A673 (cell line): ENCODE measurements at regions of chr19 and their contacts with region 1.

Region 1: DNA sequence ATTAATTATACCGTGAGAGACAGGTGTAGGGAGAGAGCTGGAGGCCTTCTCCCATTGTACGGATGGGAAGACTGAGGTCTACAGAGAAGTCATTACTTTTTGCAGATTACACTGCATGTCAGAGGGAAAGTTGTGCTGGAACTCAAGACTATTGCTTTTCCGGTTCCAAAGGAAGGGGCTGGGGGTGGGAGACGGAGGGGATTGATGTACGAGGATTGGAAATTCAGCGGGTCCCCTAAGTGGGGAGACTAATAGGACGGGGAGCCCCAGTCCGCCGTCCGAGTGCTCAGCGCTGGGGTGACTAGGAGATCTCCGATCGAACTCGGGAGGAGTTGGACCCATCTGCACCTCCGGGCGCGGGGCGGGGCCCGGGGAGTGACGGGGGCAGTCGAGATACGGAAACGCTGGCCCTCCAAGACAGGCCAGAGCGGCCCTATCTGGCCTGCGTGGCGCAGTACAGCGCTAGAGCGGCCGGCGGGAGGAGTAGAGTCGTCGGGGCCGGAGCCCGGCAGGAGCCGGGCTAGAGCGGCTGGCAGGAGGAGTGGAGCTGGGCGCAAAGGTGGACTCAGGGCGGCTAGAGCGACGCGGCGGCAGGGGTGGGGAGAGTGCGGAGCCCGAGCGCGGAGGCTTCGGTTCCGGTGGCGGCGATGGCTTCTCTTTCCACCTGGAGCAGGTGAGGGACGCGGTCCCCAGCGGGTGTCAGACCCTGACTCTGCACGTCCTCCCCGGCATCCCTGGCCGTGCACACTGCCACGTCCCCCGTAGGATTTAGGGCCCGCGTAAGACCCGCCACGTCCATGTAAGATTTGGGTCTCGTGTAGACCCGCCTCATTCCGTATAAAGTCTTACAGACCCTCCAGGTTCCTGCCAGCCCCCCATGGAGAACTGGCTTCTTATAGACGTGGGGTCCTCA is 1.1 kb downstream of the ARHGEF1 start:
- DNase-seq: peak; percentile 99
- H3K4me3 ChIP-seq: peak overlapping the region; percentile 84
- H3K27ac ChIP-seq: peak overlapping the region; percentile 91
- H3K4me1 ChIP-seq: peaks cover 65% of the 10 kb centered on the region
- H3K27me3 ChIP-seq: no peaks in the 10 kb centered on the region
- CTCF ChIP-seq: no peak

Region 2: DNA sequence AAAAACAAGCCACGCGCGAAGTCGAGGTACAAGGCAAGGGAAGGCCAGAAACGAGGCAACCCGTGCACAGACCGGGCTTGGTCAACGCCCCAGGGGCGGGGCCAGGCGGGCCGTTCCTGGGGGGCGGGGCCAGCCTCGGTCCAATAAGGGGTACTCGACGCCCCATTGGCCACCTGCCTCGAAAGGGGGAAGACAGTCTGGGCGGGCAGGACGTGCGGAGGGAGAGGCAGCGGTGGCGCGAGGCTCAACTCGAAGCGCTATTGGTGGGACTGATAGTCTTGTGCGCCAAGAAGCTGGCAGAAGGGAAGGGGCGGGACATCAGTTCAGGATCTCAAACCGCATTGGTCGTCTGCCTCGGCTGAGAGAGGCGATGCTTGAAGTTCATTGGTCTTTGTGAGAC is 39.5 kb before region 1 on chr19 and contains the start of gene LYPD4:
- CTCF ChIA-PET with region 1: no interaction called
- POLR2A ChIA-PET with region 1: no interaction called
- intact Hi-C with region 1: no loop called
- DNase-seq: no peak
- H3K4me3 ChIP-seq: no peak within 1 kb of the TSS
- H3K27ac ChIP-seq: no peak within 1 kb of the TSS
- H3K4me1 ChIP-seq: no peaks in the 10 kb centered on the region
- H3K27me3 ChIP-seq: no peaks in the 10 kb centered on the region
- CTCF ChIP-seq: no peak
- total RNA-seq, gene LYPD4: not detected in 2 replicates

Region 3: GRCh38 chr19:41859618-41860418 is 24.3 kb before region 1 on chr19 and contains the start of gene RPS19:
- CTCF ChIA-PET with region 1: interaction called, 6 read pairs
- POLR2A ChIA-PET with region 1: no interaction called
- intact Hi-C with region 1: loop called (anchors 1 kb)
- DNase-seq: peak; percentile 99
- H3K4me3 ChIP-seq: peak within 1 kb of the TSS; percentile 87
- H3K27ac ChIP-seq: peak within 1 kb of the TSS; percentile 97
- H3K4me1 ChIP-seq: peaks cover 45% of the 10 kb centered on the region
- H3K27me3 ChIP-seq: no peaks in the 10 kb centered on the region
- CTCF ChIP-seq: peak; percentile 68
- total RNA-seq, gene RPS19: 2,479 and 2,559 TPM in 2 replicates

Region 4: DNA sequence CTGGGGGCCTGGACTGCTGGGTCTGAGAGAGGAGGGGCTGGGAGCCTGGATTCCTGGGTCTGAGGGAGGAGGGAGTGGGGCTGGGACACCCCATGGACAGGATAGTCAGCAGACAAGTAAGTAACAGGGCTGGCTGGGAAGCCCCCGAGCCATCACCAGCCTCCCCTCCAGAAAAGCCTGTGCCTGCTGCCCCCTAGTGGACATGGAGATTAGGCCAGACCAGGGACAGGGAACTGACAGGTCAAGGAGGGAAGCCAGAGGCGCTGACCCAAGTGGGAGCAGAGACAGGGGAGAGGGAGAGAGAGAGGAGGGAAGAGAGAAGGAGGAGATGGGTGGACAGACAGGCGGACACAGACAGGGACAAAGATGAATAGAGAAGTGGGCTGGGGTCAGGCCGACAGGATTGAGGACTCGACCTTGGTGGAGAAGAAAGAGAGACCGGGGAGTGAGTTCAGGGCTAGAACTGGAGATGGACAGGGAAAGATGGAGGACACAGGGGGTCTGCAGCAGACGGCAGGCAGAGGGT is 50.8 kb after region 1 on chr19:
- CTCF ChIA-PET with region 1: interaction called, 5 read pairs
- POLR2A ChIA-PET with region 1: interaction called, 3 read pairs
- intact Hi-C with region 1: loop called (anchors 5 kb)
- DNase-seq: peak; percentile 79
- H3K4me3 ChIP-seq: no peak overlapping the region
- H3K27ac ChIP-seq: no peak overlapping the region
- H3K4me1 ChIP-seq: peaks cover 66% of the 10 kb centered on the region
- H3K27me3 ChIP-seq: no peaks in the 10 kb centered on the region
- CTCF ChIP-seq: peak; percentile 96

Region 5: DNA sequence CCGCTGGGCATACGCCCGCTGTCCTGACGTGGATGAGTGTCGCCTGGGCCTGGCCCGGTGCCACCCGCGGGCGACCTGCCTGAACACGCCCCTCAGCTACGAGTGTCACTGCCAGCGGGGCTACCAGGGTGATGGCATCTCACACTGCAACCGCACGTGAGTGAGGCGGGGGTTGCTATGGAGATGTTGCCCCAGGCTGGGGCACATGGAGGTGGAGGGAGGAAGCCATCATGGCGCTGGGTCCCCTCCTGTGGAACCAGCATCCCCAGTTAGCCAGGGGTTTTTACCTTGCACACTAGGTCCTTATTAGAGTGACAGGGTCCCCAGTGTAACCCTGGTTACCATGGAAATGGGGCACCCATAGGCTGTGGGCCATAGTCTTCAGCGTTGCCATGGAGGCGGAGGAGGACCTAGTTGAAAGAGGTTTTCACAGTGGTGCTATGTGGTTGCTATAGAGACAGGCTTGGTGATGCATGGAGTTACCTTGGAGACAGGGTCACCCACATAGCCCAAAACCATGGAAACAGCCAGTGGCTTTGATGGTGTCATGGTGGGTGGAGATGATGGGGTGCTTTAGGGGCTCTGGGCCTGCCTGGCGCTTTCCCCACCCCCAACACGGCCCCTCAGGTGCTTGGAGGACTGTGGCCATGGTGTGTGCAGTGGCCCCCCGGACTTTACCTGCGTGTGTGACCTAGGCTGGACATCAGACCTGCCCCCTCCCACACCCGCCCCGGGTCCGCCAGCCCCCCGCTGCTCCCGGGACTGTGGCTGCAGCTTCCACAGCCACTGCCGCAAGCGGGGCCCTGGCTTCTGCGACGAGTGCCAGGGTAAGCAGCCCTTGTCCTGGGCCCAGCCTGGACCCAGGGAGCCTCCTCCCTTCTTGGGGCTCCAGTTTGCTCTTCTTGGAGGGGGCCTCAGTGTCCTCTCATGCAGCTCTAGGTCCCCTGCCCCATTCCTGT is 468.5 kb after region 1 on chr19:
- CTCF ChIA-PET with region 1: no interaction called
- POLR2A ChIA-PET with region 1: no interaction called
- intact Hi-C with region 1: no loop called
- DNase-seq: peak; percentile 29
- H3K4me3 ChIP-seq: no peak overlapping the region
- H3K27ac ChIP-seq: no peak overlapping the region
- H3K4me1 ChIP-seq: no peaks in the 10 kb centered on the region
- H3K27me3 ChIP-seq: no peaks in the 10 kb centered on the region
- CTCF ChIP-seq: no peak